ENCODE measurements at regions of chr3 and their contacts with region 1.

Region 1: DNA sequence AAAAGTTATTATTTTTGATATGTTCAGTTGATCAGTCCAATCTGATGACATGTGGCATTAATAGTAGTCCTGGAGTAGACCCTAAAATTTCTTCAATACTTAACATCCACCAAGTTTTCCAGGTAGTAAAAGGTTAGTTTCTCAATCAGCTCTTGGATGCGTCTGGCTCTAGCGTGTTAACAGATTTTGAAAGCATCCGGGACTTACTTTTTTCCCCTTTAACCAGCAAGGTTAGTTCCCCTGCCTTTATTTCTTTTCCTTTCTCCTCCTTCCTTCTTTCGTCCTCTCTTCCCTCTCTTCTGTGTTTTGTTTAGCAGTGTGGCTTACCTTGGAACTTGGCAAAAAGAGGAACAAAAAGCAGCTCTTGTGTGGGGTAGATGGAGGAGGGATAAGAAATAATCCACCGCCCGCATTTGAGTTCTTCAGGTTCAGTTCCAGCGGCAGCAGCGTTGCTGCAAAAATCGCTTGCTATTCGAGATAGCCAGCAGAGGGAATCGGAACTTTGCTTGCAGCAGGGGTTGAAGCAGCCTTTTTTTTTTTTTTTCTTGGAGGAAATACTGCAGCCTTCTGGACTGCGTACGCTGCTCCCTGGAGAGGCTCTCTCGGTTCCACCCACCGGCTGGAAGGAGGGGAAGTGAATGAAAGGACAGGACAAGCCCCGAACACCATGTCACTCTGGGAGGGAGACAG is at the start of gene RBMS3:
- DNase-seq: peak; percentile 84 to 93
- ATAC-seq: peak; percentile 93 to 96 (median 94)
- H3K4me3 ChIP-seq: peak within 1 kb of the TSS; percentile 54 to 79 (median 68)
- H3K27ac ChIP-seq: peak within 1 kb of the TSS; percentile 77 to 96 (median 92)
- H3K4me1 ChIP-seq: peaks cover 0 to 36% (median 18%) of the 10 kb centered on the region in 9 donors
- H3K27me3 ChIP-seq: no peaks in the 10 kb centered on the region
- CTCF ChIP-seq: peak; percentile 37 to 80 (median 52)
- total RNA-seq, gene RBMS3: 22.0 to 41.1 (median 28.6) TPM

Region 2: DNA sequence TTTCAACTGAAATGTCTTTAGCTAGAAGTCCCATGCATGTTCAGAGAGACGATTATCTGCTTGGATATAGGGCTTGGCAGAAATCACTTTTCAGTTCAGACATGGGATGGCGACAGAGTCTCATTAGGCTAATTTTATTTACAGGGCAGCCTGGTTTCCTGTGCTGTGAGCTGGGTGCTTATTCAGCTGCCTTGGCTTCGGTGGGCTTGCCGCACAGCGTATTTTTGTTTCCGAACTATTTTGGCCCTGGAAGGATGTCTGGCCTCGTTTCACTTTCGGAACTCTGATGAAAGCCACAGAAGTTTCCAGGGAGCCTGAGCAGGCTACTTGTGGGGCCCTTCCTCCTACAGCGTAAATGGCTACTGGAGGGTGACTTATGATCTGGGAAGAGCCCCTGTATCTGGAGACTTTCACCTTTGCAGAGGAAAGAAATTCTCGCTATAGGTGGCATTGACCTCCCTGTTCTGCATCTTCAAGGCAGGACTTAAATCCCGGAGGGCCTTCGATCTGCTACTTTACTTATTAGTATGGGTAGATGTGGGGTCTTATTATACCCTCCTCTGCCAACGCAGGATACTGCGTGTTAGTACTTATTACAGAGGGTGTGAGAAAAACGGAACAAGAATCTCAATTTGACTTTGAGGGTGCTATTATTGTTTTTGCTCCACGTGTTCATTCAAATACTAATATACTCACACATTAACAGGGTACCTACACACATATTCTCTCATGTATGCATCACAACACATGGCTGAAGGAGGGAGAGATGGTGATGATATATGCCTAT is 363.6 kb before region 1 on chr3:
- intact Hi-C with region 1: loop called in 5 of 10 experiments (anchors 2 to 10 kb)
- DNase-seq: peak; percentile 33 to 84
- ATAC-seq: peak; percentile 93 to 97 (median 96)
- H3K4me3 ChIP-seq: peak overlapping the region in 7 of 10 donors; percentile 29 to 48 (median 39)
- H3K27ac ChIP-seq: peak overlapping the region in 9 of 10 donors; percentile 13 to 70 (median 63)
- H3K4me1 ChIP-seq: peaks cover 0 to 27% (median 10%) of the 10 kb centered on the region in 9 donors
- H3K27me3 ChIP-seq: no peaks in the 10 kb centered on the region
- CTCF ChIP-seq: peak; percentile 46 to 83 (median 70)

Region 3: DNA sequence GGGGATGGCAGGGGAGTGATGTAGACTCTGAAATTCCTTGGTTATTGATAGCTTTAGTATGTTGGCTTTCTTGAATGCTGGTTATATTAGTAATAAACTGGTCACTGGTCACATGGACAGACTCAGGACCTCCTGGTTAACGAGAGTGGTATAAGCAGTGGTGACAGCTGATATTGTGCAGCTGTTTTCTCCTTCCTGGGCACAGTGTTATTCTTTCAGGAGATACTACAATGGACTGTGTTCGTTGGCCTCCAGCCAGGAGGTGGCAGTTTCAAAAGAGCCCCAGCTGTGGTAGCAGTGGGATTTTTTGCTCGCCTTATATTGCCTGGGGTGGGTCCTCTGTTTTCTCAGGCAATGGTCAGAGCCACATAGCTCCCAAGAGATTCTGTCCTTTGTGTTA is 181.3 kb before region 1 on chr3:
- intact Hi-C with region 1: no loop called
- DNase-seq: no peak
- ATAC-seq: no peak
- H3K4me3 ChIP-seq: no peak overlapping the region
- H3K27ac ChIP-seq: no peak overlapping the region
- H3K4me1 ChIP-seq: no peaks in the 10 kb centered on the region
- H3K27me3 ChIP-seq: no peaks in the 10 kb centered on the region
- CTCF ChIP-seq: no peak

Region 4: GRCh38 chr3:29324180-29324651 is 43.7 kb after region 1 on chr3:
- intact Hi-C with region 1: loop called in 2 of 10 experiments (anchors 5 kb)
- DNase-seq: peak; percentile 14 to 67
- ATAC-seq: peak; percentile 65 to 93 (median 88)
- H3K4me3 ChIP-seq: peak overlapping the region in 8 of 10 donors; percentile 5 to 40 (median 34)
- H3K27ac ChIP-seq: peak overlapping the region; percentile 4 to 83 (median 74)
- H3K4me1 ChIP-seq: peaks cover 4 to 74% (median 42%) of the 10 kb centered on the region in 9 donors
- H3K27me3 ChIP-seq: no peaks in the 10 kb centered on the region
- CTCF ChIP-seq: no peak

Region 5: GRCh38 chr3:29453284-29454001 is 172.9 kb after region 1 on chr3:
- intact Hi-C with region 1: loop called in 1 of 10 experiments (anchors 10 kb)
- DNase-seq: peak; percentile 21 to 47
- ATAC-seq: peak; percentile 57 to 87 (median 74)
- H3K4me3 ChIP-seq: peak overlapping the region in 4 of 10 donors; percentile 2 to 16 (median 10)
- H3K27ac ChIP-seq: peak overlapping the region in 5 of 10 donors; percentile 1 to 69 (median 19)
- H3K4me1 ChIP-seq: peaks cover 5 to 33% (median 23%) of the 10 kb centered on the region in 9 donors
- H3K27me3 ChIP-seq: no peaks in the 10 kb centered on the region
- CTCF ChIP-seq: no peak

Region 6: DNA sequence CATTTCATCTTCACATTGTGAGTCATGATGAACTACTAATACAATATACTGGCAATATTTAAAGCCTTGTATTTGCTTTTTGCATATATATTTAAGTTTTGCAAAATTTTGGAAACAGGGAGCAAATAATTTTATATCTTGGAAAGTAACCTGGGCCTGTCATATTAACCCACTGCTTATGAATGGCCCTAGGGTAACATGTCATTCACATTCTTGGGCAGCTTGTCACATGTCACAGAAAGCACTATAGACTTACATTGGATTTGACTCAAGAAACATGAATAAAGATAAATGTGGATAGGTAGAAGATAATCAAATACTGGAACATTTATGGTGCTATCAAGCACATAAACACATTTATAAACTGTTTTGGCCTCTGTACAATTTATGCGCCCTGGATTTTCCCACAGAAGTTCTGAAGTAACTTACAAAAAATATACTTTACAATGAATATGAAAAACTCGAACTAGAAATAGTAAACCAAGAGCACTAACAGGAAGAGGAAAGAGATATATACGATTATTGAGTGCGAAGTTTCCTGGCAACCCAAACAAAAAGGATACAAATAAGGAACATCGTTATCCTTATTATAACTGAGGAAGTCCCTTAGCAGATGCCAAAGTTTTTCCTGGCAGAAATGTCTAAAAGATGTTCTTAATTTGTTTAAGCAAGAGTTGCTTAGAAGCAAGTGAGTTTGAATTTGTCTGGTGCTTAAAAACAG is 257.5 kb after region 1 on chr3:
- intact Hi-C with region 1: loop called in 1 of 10 experiments (anchors 10 kb)
- DNase-seq: no peak
- ATAC-seq: peak in 4 of 8 donors; percentile 16 to 47 (median 31)
- H3K4me3 ChIP-seq: no peak overlapping the region
- H3K27ac ChIP-seq: peak overlapping the region in 6 of 10 donors; percentile 2 to 35 (median 16)
- H3K4me1 ChIP-seq: peaks cover 5 to 57% (median 23%) of the 10 kb centered on the region in 9 donors
- H3K27me3 ChIP-seq: no peaks in the 10 kb centered on the region
- CTCF ChIP-seq: no peak

Region 7: GRCh38 chr3:29693863-29694262 is 413.3 kb after region 1 on chr3:
- intact Hi-C with region 1: loop called in 3 of 10 experiments (anchors 5 to 10 kb)
- DNase-seq: no peak
- ATAC-seq: peak in 3 of 8 donors; percentile 47 to 53 (median 51)
- H3K4me3 ChIP-seq: no peak overlapping the region
- H3K27ac ChIP-seq: peak overlapping the region in 7 of 10 donors; percentile 53 to 89 (median 74)
- H3K4me1 ChIP-seq: peaks cover 3 to 47% (median 42%) of the 10 kb centered on the region in 9 donors
- H3K27me3 ChIP-seq: no peaks in the 10 kb centered on the region
- CTCF ChIP-seq: no peak

Region 8: GRCh38 chr3:29759411-29760225 is 479.1 kb after region 1 on chr3:
- intact Hi-C with region 1: loop called in 8 of 10 experiments (anchors 1 to 10 kb)
- DNase-seq: peak in 1 of 2 donors; percentile 9
- ATAC-seq: peak in 7 of 8 donors; percentile 44 to 75 (median 57)
- H3K4me3 ChIP-seq: peak overlapping the region in 2 of 10 donors; percentile 9 to 11
- H3K27ac ChIP-seq: peak overlapping the region; percentile 4 to 88 (median 78)
- H3K4me1 ChIP-seq: peaks cover 11 to 67% (median 57%) of the 10 kb centered on the region in 9 donors
- H3K27me3 ChIP-seq: no peaks in the 10 kb centered on the region
- CTCF ChIP-seq: no peak